CD4-positive, alpha-beta T cell (primary cell): ENCODE measurements at regions of chr3 and their contacts with region 1.

Region 1: DNA sequence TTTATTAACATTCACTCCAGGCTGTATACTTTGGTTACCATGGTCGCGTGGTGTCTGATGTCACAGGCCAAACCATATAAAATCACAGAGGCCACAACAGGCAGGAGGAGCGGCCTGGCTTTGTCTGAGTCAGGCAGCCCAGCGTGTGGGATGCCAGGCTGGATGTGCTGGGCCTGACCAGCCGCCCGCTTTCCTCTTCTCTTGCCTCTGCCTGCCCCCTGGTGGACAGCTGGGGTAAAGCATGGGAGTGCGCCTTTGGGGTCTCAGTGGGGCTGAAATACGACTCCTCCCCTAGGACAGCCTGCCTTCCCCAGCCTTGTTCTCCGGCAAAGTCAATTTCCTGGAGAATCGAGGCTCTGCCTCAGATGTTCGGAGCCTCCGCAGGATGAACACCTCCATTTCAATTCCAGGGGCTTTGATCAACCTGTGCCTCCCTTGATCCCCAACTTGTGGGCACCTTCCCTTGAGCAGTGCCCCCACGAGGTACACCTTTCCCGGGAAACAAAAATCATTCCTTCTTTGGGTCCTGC is 78.2 kb downstream of the CCNL1 start:
- DNase-seq: peak; percentile 76 to 93 (median 81)
- ATAC-seq: peak; percentile 93
- H3K4me3 ChIP-seq: no peak overlapping the region
- H3K4me3 Mint-ChIP-seq: no peak overlapping the region
- H3K27ac ChIP-seq: peak overlapping the region in 1 of 2 donors; percentile 25
- H3K27ac Mint-ChIP-seq: peak overlapping the region; percentile 64
- H3K4me1 ChIP-seq: peaks cover 14% of the 10 kb centered on the region
- H3K4me1 Mint-ChIP-seq: peaks cover 17% of the 10 kb centered on the region
- H3K27me3 ChIP-seq: no peaks in the 10 kb centered on the region
- H3K27me3 Mint-ChIP-seq: no peaks in the 10 kb centered on the region
- CTCF ChIP-seq: peak; percentile 98

Region 2: DNA sequence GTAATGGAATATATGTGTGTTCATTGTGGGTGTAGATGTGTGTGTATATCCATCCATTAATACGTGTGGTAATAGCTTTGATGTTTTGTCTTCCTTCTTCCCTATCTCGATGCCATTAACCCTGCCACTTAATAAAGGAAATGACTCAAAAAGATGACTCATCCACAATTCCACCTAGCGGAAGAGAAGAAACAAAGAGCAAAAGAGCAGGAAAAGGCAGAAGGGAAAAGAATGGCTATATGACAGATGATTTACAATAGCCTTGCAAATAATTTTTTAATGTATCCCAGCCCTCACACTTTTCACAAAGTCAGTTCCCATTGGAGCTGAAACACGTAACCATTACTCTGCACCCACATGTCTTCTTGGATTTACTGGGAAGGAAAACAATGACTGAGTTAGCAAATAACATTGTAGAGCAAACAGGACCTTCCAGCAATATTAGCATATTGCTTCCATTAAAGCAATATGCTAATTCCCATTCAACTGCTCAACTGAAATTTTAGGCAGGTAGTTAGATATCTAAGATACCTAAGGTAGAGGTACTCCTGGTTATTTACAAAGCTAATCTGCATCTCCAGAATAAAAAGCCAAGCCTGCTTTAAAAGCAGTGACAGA is 764.2 kb before region 1 on chr3:
- CTCF ChIA-PET with region 1: no interaction called
- POLR2A ChIA-PET with region 1: no interaction called
- intact Hi-C with region 1: no loop called
- DNase-seq: peak in 1 of 14 experiments; percentile 9
- ATAC-seq: no peak
- H3K4me3 ChIP-seq: no peak overlapping the region
- H3K4me3 Mint-ChIP-seq: no peak overlapping the region
- H3K27ac ChIP-seq: no peak overlapping the region
- H3K27ac Mint-ChIP-seq: no peak overlapping the region
- H3K4me1 ChIP-seq: no peaks in the 10 kb centered on the region
- H3K4me1 Mint-ChIP-seq: no peaks in the 10 kb centered on the region
- H3K27me3 ChIP-seq: no peaks in the 10 kb centered on the region
- H3K27me3 Mint-ChIP-seq: peaks cover 9% of the 10 kb centered on the region
- CTCF ChIP-seq: no peak

Region 3: DNA sequence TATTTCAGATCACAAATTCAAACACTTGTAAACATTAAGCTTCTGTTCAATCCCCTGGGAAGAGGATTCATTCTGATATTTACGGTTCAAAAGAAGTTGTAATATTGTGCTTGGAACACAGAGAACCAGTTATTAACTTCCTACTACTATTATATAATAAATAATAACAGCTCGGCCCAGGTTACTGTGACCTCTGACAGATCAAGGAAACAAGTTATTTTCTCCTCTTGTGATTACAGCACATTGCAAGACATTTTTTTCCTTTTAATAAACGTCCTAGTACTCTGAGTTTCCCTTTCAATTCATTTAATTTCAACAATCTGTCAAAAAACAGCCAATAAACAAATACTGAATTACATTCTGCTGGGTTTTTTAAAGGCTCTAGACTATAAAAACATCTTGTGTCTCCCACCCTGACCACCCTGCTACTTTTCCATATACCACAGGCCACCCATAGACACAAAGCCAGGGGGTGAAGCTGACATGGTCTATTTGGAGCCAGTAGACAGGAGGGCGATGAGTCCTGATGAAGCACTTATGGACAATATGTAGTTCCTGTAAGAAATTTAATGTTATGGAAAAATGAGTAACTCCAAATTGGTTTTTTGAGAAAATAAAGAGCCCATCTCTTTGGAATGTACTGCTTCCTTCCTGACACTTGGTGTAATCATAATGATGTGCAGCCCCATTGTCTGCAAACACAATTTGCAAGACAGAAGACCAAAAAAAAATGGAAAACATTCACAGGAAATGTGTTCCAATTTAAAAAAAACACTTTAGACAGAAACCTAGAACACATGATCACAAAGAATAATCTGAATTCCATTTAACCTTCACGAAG is 538.8 kb before region 1 on chr3:
- CTCF ChIA-PET with region 1: no interaction called
- POLR2A ChIA-PET with region 1: no interaction called
- intact Hi-C with region 1: loop called in 1 of 2 experiments (anchors 5 kb)
- DNase-seq: no peak
- ATAC-seq: no peak
- H3K4me3 ChIP-seq: no peak overlapping the region
- H3K4me3 Mint-ChIP-seq: no peak overlapping the region
- H3K27ac ChIP-seq: no peak overlapping the region
- H3K27ac Mint-ChIP-seq: no peak overlapping the region
- H3K4me1 ChIP-seq: peaks cover 3% of the 10 kb centered on the region
- H3K4me1 Mint-ChIP-seq: peaks cover 18% of the 10 kb centered on the region
- H3K27me3 ChIP-seq: no peaks in the 10 kb centered on the region
- H3K27me3 Mint-ChIP-seq: no peaks in the 10 kb centered on the region
- CTCF ChIP-seq: no peak

Region 4: GRCh38 chr3:156826144-156826895 is 255.4 kb before region 1 on chr3 and contains the start of gene LEKR1:
- CTCF ChIA-PET with region 1: interaction called, 6 read pairs
- POLR2A ChIA-PET with region 1: no interaction called
- intact Hi-C with region 1: loop called in 1 of 2 experiments (anchors 5 kb)
- DNase-seq: peak; percentile 22 to 90 (median 54)
- ATAC-seq: peak; percentile 54
- H3K4me3 ChIP-seq: peak within 1 kb of the TSS; percentile 87
- H3K4me3 Mint-ChIP-seq: peak within 1 kb of the TSS; percentile 95
- H3K27ac ChIP-seq: peak within 1 kb of the TSS; percentile 73 to 79
- H3K27ac Mint-ChIP-seq: peak within 1 kb of the TSS; percentile 93
- H3K4me1 ChIP-seq: peaks cover 15% of the 10 kb centered on the region
- H3K4me1 Mint-ChIP-seq: peaks cover 16% of the 10 kb centered on the region
- H3K27me3 ChIP-seq: no peaks in the 10 kb centered on the region
- H3K27me3 Mint-ChIP-seq: no peaks in the 10 kb centered on the region
- CTCF ChIP-seq: no peak
- total RNA-seq, gene LEKR1: 0.77 to 1.0 TPM